ENCODE measurements at regions of chr5 and their contacts with region 1.

Region 1: DNA sequence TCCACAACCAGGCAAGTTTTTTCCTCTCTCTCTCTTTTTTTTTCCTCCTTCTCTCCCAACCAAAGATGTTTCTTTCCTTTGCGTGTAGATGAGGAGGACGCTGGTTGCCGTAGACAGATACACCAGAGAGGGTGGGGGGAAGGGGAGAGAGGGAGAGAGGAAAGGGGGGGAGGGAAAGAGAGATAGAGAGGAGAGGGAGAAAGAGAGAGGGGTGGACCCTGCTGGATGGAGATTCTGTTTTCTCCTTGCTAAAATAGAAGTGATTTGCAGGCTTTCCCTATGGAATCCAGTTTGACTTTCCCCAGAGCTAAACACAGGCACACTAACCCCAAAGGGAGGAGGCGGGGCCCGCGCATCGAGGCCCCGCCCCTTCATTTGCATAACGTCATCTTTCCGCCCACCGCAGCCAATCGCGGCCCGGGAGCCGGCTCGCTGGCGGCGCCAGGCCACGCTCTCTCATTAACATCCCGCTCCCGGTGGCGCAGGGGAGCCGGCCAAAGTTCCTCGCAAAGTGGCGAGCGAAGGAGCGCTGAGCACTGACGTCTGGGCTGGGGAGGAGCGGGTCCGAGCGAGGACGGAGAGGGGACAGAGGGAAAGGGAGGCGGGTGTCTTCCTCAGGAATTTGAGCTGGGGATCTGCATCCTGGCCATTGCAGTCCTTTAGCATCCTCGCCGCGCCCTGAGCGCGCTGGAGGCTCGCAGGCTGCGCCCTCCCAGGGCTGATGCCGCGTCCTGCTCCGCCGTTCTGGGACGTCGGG is 487 bp upstream of the EBF1 start:
- DNase-seq: peak; percentile 91
- ATAC-seq: peak; percentile 87
- H3K4me3 Mint-ChIP-seq: peak overlapping the region; percentile 77
- H3K27ac Mint-ChIP-seq: peak overlapping the region; percentile 53
- H3K4me1 Mint-ChIP-seq: peaks cover 33% of the 10 kb centered on the region
- H3K27me3 Mint-ChIP-seq: peaks cover 56% of the 10 kb centered on the region

Region 2: GRCh38 chr5:158819840-158820620 is 280.2 kb before region 1 on chr5:
- CTCF ChIA-PET with region 1: no interaction called
- POLR2A ChIA-PET with region 1: no interaction called
- intact Hi-C with region 1: loop called in 1 of 2 experiments (anchors 5 kb)
- DNase-seq: peak; percentile 41
- ATAC-seq: peak; percentile 99
- H3K4me3 Mint-ChIP-seq: no peak overlapping the region
- H3K27ac Mint-ChIP-seq: peak overlapping the region; percentile 48
- H3K4me1 Mint-ChIP-seq: peaks cover 31% of the 10 kb centered on the region
- H3K27me3 Mint-ChIP-seq: peaks cover 10% of the 10 kb centered on the region

Region 3: GRCh38 chr5:158875272-158875679 is 224.9 kb before region 1 on chr5:
- CTCF ChIA-PET with region 1: no interaction called
- POLR2A ChIA-PET with region 1: no interaction called
- intact Hi-C with region 1: loop called (anchors 5 to 10 kb)
- DNase-seq: no peak
- ATAC-seq: peak; percentile 71
- H3K4me3 Mint-ChIP-seq: peak overlapping the region; percentile 13
- H3K27ac Mint-ChIP-seq: no peak overlapping the region
- H3K4me1 Mint-ChIP-seq: peaks cover 27% of the 10 kb centered on the region
- H3K27me3 Mint-ChIP-seq: peaks cover 4% of the 10 kb centered on the region